BJ (cell line): ENCODE measurements at regions of chr6 and their contacts with region 1.

Region 1: GRCh38 chr6:35624341-35625070 is 64.2 kb downstream of the FKBP5 start:
- DNase-seq: no peak
- H3K4me3 ChIP-seq: no peak overlapping the region
- H3K27me3 ChIP-seq: no peaks in the 10 kb centered on the region
- CTCF ChIP-seq: peak; percentile 45

Region 2: DNA sequence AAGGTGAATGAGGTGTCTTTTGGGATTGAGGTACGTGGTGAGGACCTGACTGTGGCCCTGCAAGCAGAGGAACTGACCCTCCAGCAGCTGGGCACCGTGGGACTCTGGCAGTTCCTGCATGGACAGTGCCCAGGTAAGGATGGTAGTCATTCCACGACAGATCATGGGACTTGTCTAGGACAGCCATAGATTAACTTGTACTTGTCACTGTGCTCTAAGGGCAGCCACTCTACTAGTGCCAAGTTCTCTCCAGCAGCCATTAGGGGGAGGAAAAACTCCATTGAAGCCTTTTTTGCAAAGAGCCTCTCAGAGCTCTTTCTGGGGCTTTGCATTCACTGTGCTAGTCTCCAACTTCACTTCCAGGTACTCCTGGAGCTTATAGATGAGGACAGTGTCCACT is 757.0 kb before region 1 on chr6:
- CTCF ChIA-PET with region 1: no interaction called
- POLR2A ChIA-PET with region 1: no interaction called
- DNase-seq: no peak
- H3K4me3 ChIP-seq: no peak overlapping the region
- H3K27me3 ChIP-seq: no peaks in the 10 kb centered on the region
- CTCF ChIP-seq: 0 out of 2 replicates have a peak, but pooled peaks have one; percentile 8

Region 3: DNA sequence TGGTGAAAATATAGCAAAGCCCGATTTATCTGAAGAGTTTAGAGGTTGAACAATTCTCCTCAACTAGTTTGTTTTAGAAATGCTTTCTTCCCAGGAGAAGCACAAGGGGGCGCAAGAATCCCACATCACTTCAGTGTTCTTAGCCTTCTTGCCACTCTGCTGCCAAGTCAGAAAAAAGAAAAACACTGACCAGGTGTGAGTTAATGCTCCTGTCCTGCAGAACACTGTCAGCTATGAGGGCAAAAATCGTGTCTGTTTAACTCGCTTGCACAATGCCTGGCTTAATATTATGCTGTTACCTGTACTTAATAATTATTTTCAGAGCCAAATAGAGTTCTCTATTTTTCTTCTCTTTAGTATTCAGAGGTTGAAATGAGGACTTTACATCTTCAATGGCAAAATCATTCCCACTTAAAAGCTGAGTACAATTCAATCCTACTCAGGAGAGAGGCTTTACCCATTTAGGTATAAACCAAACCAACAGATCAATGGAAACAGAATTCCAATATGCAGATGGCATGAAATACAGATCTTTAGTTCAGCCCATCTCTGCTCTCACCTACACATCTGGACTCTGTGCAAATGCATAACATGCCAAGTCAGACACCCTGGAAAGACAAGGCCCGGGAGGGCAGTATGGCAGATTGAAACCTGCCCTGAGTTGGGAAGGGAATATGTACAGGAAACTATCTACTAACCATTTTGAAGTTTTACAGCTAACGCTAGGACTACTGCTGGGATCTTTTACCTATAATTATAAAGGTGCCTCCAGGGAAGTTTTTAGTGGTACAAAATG is 40.4 kb before region 1 on chr6:
- CTCF ChIA-PET with region 1: interaction called, 20 read pairs
- POLR2A ChIA-PET with region 1: no interaction called
- DNase-seq: no peak
- H3K4me3 ChIP-seq: no peak overlapping the region
- H3K27me3 ChIP-seq: no peaks in the 10 kb centered on the region
- CTCF ChIP-seq: peak; percentile 81

Region 4: GRCh38 chr6:35590622-35591066 is 33.9 kb before region 1 on chr6:
- CTCF ChIA-PET with region 1: interaction called, 20 read pairs
- POLR2A ChIA-PET with region 1: no interaction called
- DNase-seq: no peak
- H3K4me3 ChIP-seq: no peak overlapping the region
- H3K27me3 ChIP-seq: no peaks in the 10 kb centered on the region
- CTCF ChIP-seq: no peak

Region 5: GRCh38 chr6:35601331-35602132 is 23.0 kb before region 1 on chr6:
- CTCF ChIA-PET with region 1: interaction called, 11 read pairs
- POLR2A ChIA-PET with region 1: no interaction called
- DNase-seq: peak; percentile 50
- H3K4me3 ChIP-seq: no peak overlapping the region
- H3K27me3 ChIP-seq: no peaks in the 10 kb centered on the region
- CTCF ChIP-seq: no peak